Breast epithelium (tissue), 4 donors: ENCODE measurements at regions of chr6 and their contacts with region 1.

Region 1: GRCh38 chr6:95636552-95637431 is 59.5 kb downstream of the MANEA start:
- DNase-seq: no peak
- H3K4me3 ChIP-seq: no peak overlapping the region
- H3K27ac ChIP-seq: no peak overlapping the region
- H3K4me1 ChIP-seq: no peaks in the 10 kb centered on the region
- H3K27me3 ChIP-seq: no peaks in the 10 kb centered on the region
- CTCF ChIP-seq: no peak
- POLR2A ChIP-seq: no peak

Region 2: DNA sequence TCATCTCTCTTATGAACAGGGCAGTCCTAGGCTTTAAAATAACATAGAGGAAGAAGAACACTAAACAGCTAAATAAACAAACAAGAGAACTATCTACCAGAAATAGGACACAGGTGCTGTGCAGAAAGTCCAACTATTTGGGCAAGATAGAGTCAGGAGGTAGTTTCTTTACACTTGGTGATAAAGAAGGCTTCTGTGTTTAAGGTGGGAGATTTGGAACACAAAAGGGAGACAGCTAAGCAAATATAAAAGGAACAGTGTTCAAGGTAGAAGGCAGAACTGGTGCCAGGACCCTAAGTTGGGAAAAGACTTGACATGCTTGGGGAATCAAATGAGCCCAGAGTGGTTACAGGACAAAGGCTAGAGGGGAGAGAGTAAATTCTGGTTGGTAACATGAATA is 51.0 kb after region 1 on chr6:
- intact Hi-C with region 1: loop called (anchors 2 kb)
- DNase-seq: no peak
- H3K4me3 ChIP-seq: no peak overlapping the region
- H3K27ac ChIP-seq: no peak overlapping the region
- H3K4me1 ChIP-seq: no peaks in the 10 kb centered on the region
- H3K27me3 ChIP-seq: no peaks in the 10 kb centered on the region
- CTCF ChIP-seq: no peak
- POLR2A ChIP-seq: no peak